Activated CD4-positive, alpha-beta memory T cell treated with anti-CD3 and anti-CD28 coated beads for 36 hours (primary cell): ENCODE measurements at regions of chr1 and their contacts with region 1.

Region 1: GRCh38 chr1:172719694-172720138 is 60.8 kb downstream of the FASLG start:
- DNase-seq: no peak
- H3K4me3 Mint-ChIP-seq: no peak overlapping the region
- H3K27ac Mint-ChIP-seq: no peak overlapping the region
- H3K4me1 Mint-ChIP-seq: peaks cover 41% of the 10 kb centered on the region
- H3K27me3 Mint-ChIP-seq: no peaks in the 10 kb centered on the region

Region 2: GRCh38 chr1:172002725-172003345 is 716.9 kb before region 1 on chr1:
- CTCF ChIA-PET with region 1: interaction called, 5 read pairs
- POLR2A ChIA-PET with region 1: no interaction called
- intact Hi-C with region 1: loop called (anchors 10 kb)
- DNase-seq: peak; percentile 25
- H3K4me3 Mint-ChIP-seq: no peak overlapping the region
- H3K27ac Mint-ChIP-seq: no peak overlapping the region
- H3K4me1 Mint-ChIP-seq: no peaks in the 10 kb centered on the region
- H3K27me3 Mint-ChIP-seq: no peaks in the 10 kb centered on the region

Region 3: GRCh38 chr1:172449585-172450534 is 269.9 kb before region 1 on chr1:
- CTCF ChIA-PET with region 1: interaction called, 36 read pairs
- POLR2A ChIA-PET with region 1: no interaction called
- intact Hi-C with region 1: loop called (anchors 1 kb)
- DNase-seq: peak; percentile 47
- H3K4me3 Mint-ChIP-seq: peak overlapping the region; percentile 36
- H3K27ac Mint-ChIP-seq: no peak overlapping the region
- H3K4me1 Mint-ChIP-seq: peaks cover 31% of the 10 kb centered on the region
- H3K27me3 Mint-ChIP-seq: no peaks in the 10 kb centered on the region

Region 4: DNA sequence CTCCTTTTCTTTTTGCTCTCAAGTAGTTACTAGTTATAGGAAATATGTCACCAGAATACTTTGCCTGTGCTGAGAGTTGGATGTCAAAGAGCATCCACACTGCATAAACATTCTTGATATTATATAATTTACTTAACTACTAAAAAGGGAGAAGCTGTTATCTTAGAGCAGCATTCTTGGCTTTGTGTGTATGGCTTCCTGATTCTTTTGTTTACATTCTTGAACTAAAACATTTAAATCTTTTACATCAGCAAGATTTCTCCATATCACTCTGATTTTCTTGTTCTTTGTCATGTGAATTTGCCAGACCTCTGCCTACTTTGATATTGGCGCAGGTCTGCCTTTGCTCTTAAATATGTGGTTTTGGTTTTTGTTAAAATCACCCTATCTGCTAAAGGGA is 137.9 kb before region 1 on chr1:
- CTCF ChIA-PET with region 1: interaction called, 12 read pairs
- POLR2A ChIA-PET with region 1: no interaction called
- intact Hi-C with region 1: no loop called
- DNase-seq: no peak
- H3K4me3 Mint-ChIP-seq: no peak overlapping the region
- H3K27ac Mint-ChIP-seq: no peak overlapping the region
- H3K4me1 Mint-ChIP-seq: peaks cover 17% of the 10 kb centered on the region
- H3K27me3 Mint-ChIP-seq: no peaks in the 10 kb centered on the region

Region 5: DNA sequence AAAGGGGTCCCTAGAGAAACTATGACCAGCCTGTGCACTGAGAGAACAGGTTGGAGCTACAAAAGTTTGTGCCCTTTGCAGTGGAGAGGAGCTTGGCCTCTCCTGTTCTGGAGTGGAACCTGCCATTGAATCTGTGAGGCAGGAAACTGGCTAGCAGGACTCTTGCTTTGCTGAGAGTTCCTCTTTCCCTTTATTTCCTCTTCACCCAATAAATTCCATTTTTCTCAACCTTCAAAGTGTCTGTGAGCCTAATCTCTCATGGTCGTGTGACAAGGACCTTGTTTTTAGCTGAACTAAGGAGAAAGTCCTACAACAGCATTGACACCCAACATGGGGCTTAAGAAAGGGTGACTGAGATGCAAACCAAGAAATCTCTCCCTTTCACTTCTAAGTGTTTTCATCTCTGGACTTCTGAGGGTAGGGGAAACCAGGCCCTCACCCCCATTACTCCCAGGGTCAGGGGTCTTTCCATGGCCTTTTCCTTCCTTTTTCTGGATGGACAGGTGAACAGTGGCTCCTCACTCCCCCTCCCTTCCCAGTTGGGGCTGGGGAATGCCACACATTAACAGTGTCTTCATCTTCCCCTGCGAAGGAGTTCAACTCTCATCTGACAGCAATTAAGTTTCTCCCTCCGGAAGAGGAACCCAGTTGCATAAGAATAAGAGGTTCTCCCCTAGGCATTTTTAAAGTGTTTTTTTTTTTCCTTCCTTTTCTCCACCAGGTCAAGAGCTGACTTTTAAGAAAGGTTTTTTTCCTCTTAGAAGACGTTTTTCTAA is 103.3 kb before region 1 on chr1:
- CTCF ChIA-PET with region 1: interaction called, 146 read pairs
- POLR2A ChIA-PET with region 1: no interaction called
- intact Hi-C with region 1: no loop called
- DNase-seq: no peak
- H3K4me3 Mint-ChIP-seq: no peak overlapping the region
- H3K27ac Mint-ChIP-seq: no peak overlapping the region
- H3K4me1 Mint-ChIP-seq: no peaks in the 10 kb centered on the region
- H3K27me3 Mint-ChIP-seq: no peaks in the 10 kb centered on the region

Region 6: GRCh38 chr1:172662464-172663109 is 57.1 kb before region 1 on chr1:
- CTCF ChIA-PET with region 1: interaction called, 41 read pairs
- POLR2A ChIA-PET with region 1: interaction called, 3 read pairs
- intact Hi-C with region 1: loop called (anchors 2 kb)
- DNase-seq: peak; percentile 97
- H3K4me3 Mint-ChIP-seq: peak overlapping the region; percentile 78
- H3K27ac Mint-ChIP-seq: peak overlapping the region; percentile 91
- H3K4me1 Mint-ChIP-seq: peaks cover 81% of the 10 kb centered on the region
- H3K27me3 Mint-ChIP-seq: peaks cover 10% of the 10 kb centered on the region

Region 7: DNA sequence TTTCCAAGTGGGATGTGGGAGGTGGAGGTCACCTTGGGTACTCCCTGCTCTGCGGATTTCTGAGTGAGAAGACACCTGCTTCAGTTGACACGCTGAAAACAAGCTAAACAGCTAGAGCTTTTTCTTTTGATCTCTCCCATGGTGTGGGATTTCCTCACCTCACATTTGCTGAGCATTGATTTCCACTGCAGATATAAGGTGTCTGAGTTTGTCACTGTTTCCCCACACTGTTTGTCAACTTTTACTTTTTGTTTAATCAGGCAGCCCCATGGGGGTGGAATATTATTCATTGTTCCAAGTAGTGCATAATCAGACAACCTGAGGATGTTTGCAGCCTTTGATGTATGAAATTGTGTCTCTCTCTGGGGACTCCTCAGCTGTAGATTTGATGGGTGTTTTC is 11.3 kb before region 1 on chr1:
- CTCF ChIA-PET with region 1: interaction called, 13 read pairs
- POLR2A ChIA-PET with region 1: no interaction called
- intact Hi-C with region 1: loop called (anchors 1 kb)
- DNase-seq: peak; percentile 49
- H3K4me3 Mint-ChIP-seq: peak overlapping the region; percentile 48
- H3K27ac Mint-ChIP-seq: peak overlapping the region; percentile 46
- H3K4me1 Mint-ChIP-seq: peaks cover 46% of the 10 kb centered on the region
- H3K27me3 Mint-ChIP-seq: no peaks in the 10 kb centered on the region